ENCODE measurements at regions of chr9 and their contacts with region 1.

Region 1: DNA sequence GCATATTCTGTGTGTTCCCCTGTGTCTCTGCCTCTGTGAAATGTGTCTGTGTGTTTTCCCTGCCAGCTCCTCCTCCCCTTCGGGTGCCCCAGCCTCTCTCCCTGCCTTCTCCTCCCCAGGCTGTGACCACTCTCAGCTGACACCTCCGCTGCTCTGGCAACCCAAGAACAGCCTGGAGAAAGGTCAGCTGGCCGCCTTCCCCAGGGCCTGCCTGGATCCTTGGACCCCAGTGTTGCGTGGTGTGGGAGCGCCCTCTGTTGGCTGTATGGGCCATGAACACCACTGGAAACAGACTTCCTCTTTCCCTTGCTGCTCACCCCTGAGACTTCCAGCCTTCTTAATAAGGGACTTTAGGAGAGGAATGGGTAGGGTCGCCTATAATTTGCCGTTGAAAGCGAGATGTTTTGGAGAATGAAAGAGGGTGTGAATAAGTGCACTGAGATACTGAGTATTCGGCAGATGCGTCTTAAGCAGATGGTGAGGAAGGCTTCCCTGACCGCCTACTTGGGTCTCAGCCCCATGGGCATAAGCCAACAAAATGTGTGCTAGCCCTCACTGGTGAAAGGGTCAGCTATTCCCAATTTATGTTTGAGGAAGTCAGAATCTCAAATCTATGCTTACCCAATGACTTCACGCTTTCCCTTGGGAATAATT is 114.9 kb upstream of the TRIM32 start:
- DNase-seq: peak; percentile 41
- H3K4me3 ChIP-seq: no peak overlapping the region
- H3K27ac ChIP-seq: no peak overlapping the region
- H3K4me1 ChIP-seq: no peaks in the 10 kb centered on the region
- H3K27me3 ChIP-seq: no peaks in the 10 kb centered on the region
- CTCF ChIP-seq: peak; percentile 64 to 87
- POLR2A ChIP-seq: no peak

Region 2: DNA sequence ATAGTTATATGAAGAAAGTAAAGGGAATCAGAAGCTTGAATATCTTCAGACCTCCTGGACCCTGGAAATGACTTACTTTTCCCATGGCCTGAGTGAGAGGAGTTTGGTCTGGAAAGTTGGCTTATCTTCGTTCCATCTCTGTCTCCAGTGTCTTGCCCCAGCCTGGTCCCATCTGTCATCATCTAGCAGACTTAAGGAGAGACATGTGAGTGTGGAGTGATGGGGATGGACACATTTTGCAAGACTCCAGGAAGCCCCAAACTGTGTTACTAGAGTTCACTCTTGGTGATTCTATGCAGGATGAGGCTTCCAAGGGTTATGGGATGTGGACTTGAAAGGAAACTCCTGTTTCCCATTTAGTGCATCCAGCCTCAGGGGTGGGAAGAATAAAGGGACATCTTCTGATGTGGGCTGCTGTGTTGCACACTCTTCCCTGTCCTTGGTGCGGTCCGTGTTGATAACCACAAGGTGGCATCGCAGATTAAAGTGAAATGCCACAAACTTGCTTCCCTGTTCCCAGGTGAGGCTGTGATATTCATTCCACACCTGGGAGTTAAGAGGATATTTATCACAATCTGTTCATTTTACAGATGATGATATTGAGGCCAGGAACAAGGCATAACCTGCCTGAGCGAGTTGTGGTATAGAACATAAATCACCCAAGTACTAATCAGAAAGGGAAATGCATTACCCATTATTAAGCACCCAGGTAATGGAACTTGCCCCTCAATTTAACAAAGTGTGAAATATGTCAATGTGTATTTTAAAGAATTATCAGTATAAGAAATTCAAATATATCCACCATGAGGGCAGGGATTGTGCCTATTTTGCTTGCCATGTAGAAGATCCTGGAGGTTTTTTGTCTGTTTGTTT is 688.5 kb before region 1 on chr9:
- CTCF ChIA-PET with region 1: no interaction called
- POLR2A ChIA-PET with region 1: no interaction called
- dilution Hi-C with region 1: no loop called
- intact Hi-C with region 1: loop called (anchors 1 kb)
- DNase-seq: peak; percentile 9
- H3K4me3 ChIP-seq: no peak overlapping the region
- H3K27ac ChIP-seq: no peak overlapping the region
- H3K4me1 ChIP-seq: no peaks in the 10 kb centered on the region
- H3K27me3 ChIP-seq: no peaks in the 10 kb centered on the region
- CTCF ChIP-seq: peak in 1 of 2 donors; percentile 15
- POLR2A ChIP-seq: no peak

Region 3: DNA sequence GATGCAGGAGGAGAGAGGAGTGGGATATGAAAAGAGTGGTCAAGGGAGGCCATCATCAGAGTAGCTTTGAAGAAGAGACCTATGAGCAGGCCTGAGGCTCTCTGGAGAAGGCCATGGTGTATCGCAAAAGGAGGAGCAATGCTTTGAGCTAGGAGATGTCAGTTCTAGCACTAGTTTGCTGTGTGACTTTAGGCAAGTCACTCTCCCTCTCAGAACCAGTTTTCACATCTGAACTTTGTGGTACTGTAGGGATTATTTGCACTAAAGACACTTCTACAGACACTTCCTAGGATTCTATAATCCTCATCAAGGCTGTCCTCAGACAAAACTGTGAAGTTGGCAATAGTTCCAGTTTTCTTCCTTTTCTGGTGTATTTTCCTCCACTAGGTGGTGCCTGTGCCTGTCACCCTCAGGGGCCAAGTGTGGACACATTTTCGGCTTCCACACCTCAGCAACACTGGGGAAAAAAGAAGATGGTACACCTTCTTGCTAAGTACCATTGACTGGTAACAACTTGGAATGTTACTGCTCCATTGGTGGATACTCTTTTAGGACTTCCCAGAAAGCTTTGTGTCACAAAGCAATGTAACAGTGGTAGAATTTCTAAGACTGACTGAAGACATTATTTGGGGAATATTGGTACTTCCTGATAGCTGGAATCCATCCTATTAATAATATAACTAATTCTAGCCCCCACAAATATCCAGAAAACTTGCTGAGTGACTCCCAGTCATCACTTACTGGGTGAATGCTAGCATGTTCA is 408.7 kb before region 1 on chr9:
- CTCF ChIA-PET with region 1: no interaction called
- POLR2A ChIA-PET with region 1: no interaction called
- dilution Hi-C with region 1: no loop called
- intact Hi-C with region 1: loop called (anchors 1 kb)
- DNase-seq: no peak
- H3K4me3 ChIP-seq: no peak overlapping the region
- H3K27ac ChIP-seq: no peak overlapping the region
- H3K4me1 ChIP-seq: no peaks in the 10 kb centered on the region
- H3K27me3 ChIP-seq: no peaks in the 10 kb centered on the region
- CTCF ChIP-seq: peak; percentile 20 to 28
- POLR2A ChIP-seq: no peak

Measured in endothelial cell of umbilical vein (primary cell).